ENCODE measurements at regions of chr3 and their contacts with region 1.

Region 1: DNA sequence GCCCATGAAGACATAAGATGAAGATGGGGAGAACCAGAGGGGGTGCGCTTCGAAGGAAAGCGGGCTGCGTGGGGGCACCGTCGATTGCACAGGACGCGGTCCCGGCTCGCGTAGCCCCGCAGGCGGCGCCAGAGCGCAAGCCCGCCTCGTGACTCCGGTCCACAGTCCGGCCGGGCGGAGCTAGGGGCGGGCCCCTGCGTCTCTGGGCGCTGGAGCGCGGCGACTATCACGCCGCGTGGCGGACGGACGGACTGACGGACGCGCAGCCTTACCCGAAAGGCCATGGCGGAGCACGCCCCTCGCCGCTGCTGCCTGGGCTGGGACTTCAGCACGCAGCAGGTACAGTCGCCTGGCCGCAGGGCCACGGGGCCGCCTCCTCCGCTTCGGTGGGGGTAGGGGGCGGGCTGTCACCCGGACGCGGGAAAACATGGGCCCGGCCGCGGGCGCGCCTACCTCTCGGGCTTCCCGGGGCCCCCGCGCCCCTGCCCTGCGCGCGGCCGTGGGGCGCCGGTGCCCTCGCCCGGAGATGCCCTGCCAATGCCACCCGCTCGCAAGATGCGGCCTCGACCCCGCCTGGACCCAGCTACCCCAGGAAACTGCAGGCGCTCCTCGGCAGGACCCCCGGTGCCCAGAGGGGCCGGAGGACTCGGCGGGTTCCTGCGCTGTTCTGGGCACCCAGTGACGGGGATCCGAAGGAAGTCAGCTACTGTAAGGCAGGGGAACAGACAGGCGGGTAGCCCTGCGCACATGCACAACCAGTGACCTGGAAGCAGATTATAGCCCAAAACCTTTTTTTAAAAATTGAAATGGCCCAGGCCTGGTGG is at the start of gene XYLB:
- DNase-seq: peak; percentile 76
- H3K4me3 Mint-ChIP-seq: peak within 1 kb of the TSS; percentile 78
- H3K27ac Mint-ChIP-seq: peak within 1 kb of the TSS; percentile 66
- H3K4me1 Mint-ChIP-seq: peaks cover 8% of the 10 kb centered on the region
- H3K27me3 Mint-ChIP-seq: peaks cover 3% of the 10 kb centered on the region
- total RNA-seq, gene XYLB: 8.6 and 11.8 TPM in 2 replicates

Region 2: GRCh38 chr3:37855363-37855970 is 491.3 kb before region 1 on chr3:
- intact Hi-C with region 1: no loop called
- DNase-seq: peak; percentile 65
- H3K4me3 Mint-ChIP-seq: no peak overlapping the region
- H3K27ac Mint-ChIP-seq: no peak overlapping the region
- H3K4me1 Mint-ChIP-seq: peaks cover 8% of the 10 kb centered on the region
- H3K27me3 Mint-ChIP-seq: no peaks in the 10 kb centered on the region

Region 3: DNA sequence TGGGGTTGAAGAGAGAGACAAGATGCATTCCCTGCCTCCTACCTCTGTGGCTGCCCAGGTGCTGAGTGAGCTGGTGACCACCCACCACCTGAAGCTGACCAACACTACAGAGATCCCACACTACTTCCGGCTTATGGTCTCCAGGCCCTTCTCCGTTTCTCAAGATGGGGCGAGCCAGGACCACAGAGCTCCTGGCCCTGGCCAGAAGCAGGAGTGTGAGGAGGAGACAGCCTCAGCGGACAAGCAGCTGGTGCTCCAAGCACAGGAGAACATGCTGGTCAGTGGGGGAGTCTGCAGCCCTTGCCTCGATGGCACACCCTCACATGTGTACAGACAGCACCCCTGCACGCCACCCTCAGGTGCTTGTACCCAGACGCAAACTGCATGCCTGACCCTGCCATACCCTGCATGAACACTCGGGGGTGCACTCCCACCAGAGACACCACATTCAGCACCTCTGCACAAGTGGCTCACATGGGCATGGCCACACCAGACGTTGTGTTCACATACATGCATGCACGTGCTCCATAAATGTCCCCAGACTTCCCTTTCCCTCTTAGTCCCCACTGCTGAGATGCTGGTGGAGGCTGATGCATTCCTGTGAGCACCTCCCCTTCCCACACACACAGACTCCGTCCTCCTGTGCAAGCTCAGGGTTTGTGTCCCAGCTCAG is 228.9 kb before region 1 on chr3:
- intact Hi-C with region 1: loop called (anchors 2 kb)
- DNase-seq: peak; percentile 68
- H3K4me3 Mint-ChIP-seq: no peak overlapping the region
- H3K27ac Mint-ChIP-seq: no peak overlapping the region
- H3K4me1 Mint-ChIP-seq: no peaks in the 10 kb centered on the region
- H3K27me3 Mint-ChIP-seq: no peaks in the 10 kb centered on the region

Region 4: GRCh38 chr3:38284756-38285150 is 62.0 kb before region 1 on chr3:
- intact Hi-C with region 1: no loop called
- DNase-seq: no peak
- H3K4me3 Mint-ChIP-seq: no peak overlapping the region
- H3K27ac Mint-ChIP-seq: no peak overlapping the region
- H3K4me1 Mint-ChIP-seq: no peaks in the 10 kb centered on the region
- H3K27me3 Mint-ChIP-seq: peaks cover 4% of the 10 kb centered on the region

Region 5: GRCh38 chr3:38453075-38453912 is 106.5 kb after region 1 on chr3 and contains the start of gene ACVR2B:
- intact Hi-C with region 1: loop called (anchors 2 kb)
- DNase-seq: peak; percentile 61
- H3K4me3 Mint-ChIP-seq: peak within 1 kb of the TSS; percentile 97
- H3K27ac Mint-ChIP-seq: peak within 1 kb of the TSS; percentile 86
- H3K4me1 Mint-ChIP-seq: peaks cover 18% of the 10 kb centered on the region
- H3K27me3 Mint-ChIP-seq: peaks cover 22% of the 10 kb centered on the region
- total RNA-seq, gene ACVR2B: 10.3 and 12.0 TPM in 2 replicates

Region 6: DNA sequence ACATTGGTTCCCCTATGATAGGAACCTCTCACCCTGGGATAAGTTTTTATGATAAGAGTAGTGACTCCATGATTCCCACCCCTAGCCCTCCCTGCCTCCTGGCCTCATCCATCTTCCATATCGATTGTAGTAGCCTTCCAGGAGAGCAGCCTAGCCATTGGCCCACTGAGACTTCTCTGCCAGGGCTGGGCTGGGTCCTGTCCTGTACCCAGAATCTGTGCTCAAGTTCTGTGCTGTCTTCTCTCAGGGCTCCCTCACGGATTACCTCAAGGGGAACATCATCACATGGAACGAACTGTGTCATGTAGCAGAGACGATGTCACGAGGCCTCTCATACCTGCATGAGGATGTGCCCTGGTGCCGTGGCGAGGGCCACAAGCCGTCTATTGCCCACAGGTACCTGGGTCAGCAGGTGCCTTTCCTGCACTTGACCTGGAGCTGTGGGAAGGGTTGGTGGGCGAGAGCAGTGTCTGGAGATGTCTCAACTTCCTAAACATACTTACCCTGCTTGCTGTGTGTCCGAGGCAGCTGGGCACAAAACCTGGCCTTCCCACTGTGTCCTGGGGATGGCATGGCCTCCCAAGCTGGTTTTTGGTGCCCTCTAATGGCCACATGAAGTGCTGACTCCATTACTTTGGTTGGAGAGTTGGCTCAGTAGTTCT is 132.8 kb after region 1 on chr3:
- intact Hi-C with region 1: loop called (anchors 2 kb)
- DNase-seq: no peak
- H3K4me3 Mint-ChIP-seq: no peak overlapping the region
- H3K27ac Mint-ChIP-seq: no peak overlapping the region
- H3K4me1 Mint-ChIP-seq: peaks cover 2% of the 10 kb centered on the region
- H3K27me3 Mint-ChIP-seq: no peaks in the 10 kb centered on the region